Endothelial cell of umbilical vein (primary cell): ENCODE measurements at regions of chr17 and their contacts with region 1.

Region 1: GRCh38 chr17:64025732-64026294 is 5.4 kb upstream of the ICAM2 start:
- DNase-seq: peak; percentile 82
- H3K4me3 ChIP-seq: no peak overlapping the region
- H3K27ac ChIP-seq: peak overlapping the region; percentile 43
- H3K4me1 ChIP-seq: peaks cover 29% of the 10 kb centered on the region
- H3K27me3 ChIP-seq: no peaks in the 10 kb centered on the region
- CTCF ChIP-seq: peak; percentile 98
- POLR2A ChIP-seq: no peak

Region 2: GRCh38 chr17:63621766-63622519 is 403.9 kb before region 1 on chr17 and contains the start of gene MAP3K3:
- CTCF ChIA-PET with region 1: no interaction called
- POLR2A ChIA-PET with region 1: no interaction called
- dilution Hi-C with region 1: no loop called
- intact Hi-C with region 1: no loop called
- DNase-seq: peak; percentile 100
- H3K4me3 ChIP-seq: peak within 1 kb of the TSS; percentile 78 to 97 (median 80)
- H3K27ac ChIP-seq: peak within 1 kb of the TSS; percentile 53
- H3K4me1 ChIP-seq: peaks cover 27% of the 10 kb centered on the region
- H3K27me3 ChIP-seq: no peaks in the 10 kb centered on the region
- CTCF ChIP-seq: peak in 1 of 2 donors; percentile 24
- POLR2A ChIP-seq: peak; percentile 93
- total RNA-seq, gene MAP3K3: 81.0 and 91.4 TPM in 2 replicates

Region 3: DNA sequence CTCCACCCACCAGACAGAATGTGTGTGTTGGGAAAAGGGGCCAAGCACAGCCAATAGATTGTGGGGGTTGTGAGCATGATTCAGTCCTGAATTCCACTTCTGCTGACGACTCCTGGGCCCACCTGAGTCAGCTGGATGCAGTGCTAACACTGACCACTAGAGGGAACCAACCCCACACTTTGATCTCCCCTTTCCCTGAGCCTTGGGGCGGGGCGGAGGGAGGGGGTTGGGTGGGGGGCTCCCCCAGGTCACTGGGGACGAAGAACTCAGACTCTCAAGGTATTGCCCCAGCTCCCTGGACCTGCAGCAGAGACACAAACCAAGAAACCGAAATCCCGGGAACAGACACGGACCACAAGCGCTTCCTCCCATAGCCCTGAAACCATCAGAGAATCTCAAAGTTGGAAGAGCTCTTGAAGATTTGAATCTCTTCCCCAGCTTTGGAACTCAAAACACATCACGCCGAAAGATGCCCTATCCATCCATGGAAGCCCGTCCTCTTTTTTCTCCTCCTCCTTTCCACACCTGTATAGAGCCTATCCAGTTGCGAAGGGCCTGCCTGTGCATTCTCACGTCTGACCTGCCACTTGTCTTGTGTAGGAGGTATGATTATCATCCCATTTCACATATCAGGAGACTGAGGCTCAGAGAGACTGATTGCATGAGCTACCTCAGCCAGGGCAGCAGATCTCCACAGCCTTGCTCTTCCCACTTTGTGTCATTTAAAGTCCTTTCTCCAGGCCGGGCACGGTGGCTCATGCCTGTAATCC is 114.0 kb before region 1 on chr17:
- CTCF ChIA-PET with region 1: interaction called, 159 read pairs
- POLR2A ChIA-PET with region 1: no interaction called
- dilution Hi-C with region 1: no loop called
- intact Hi-C with region 1: no loop called
- DNase-seq: peak; percentile 26
- H3K4me3 ChIP-seq: no peak overlapping the region
- H3K27ac ChIP-seq: no peak overlapping the region
- H3K4me1 ChIP-seq: no peaks in the 10 kb centered on the region
- H3K27me3 ChIP-seq: peaks cover 6 to 8% of the 10 kb centered on the region in 2 experiments
- CTCF ChIP-seq: peak; percentile 34 to 70
- POLR2A ChIP-seq: no peak

Region 4: GRCh38 chr17:63998050-63998720 is 27.6 kb before region 1 on chr17 and contains the start of gene PRR29:
- CTCF ChIA-PET with region 1: interaction called, 140 read pairs
- POLR2A ChIA-PET with region 1: interaction called, 13 read pairs
- dilution Hi-C with region 1: no loop called
- intact Hi-C with region 1: loop called (anchors 1 kb)
- DNase-seq: peak; percentile 71
- H3K4me3 ChIP-seq: peak within 1 kb of the TSS; percentile 12 to 59 (median 37)
- H3K27ac ChIP-seq: peak within 1 kb of the TSS; percentile 23
- H3K4me1 ChIP-seq: peaks cover 42% of the 10 kb centered on the region
- H3K27me3 ChIP-seq: no peaks in the 10 kb centered on the region
- CTCF ChIP-seq: no peak
- POLR2A ChIP-seq: no peak
- total RNA-seq, gene PRR29: 0.78 and 1.2 TPM in 2 replicates

Region 5: GRCh38 chr17:64041912-64042311 is 16.1 kb after region 1 on chr17:
- CTCF ChIA-PET with region 1: interaction called, 24 read pairs
- POLR2A ChIA-PET with region 1: no interaction called
- dilution Hi-C with region 1: no loop called
- intact Hi-C with region 1: no loop called
- DNase-seq: no peak
- H3K4me3 ChIP-seq: no peak overlapping the region
- H3K27ac ChIP-seq: no peak overlapping the region
- H3K4me1 ChIP-seq: no peaks in the 10 kb centered on the region
- H3K27me3 ChIP-seq: no peaks in the 10 kb centered on the region
- CTCF ChIP-seq: no peak
- POLR2A ChIP-seq: no peak

Region 6: GRCh38 chr17:64081802-64082799 is 56.3 kb after region 1 on chr17:
- CTCF ChIA-PET with region 1: interaction called, 10 read pairs
- POLR2A ChIA-PET with region 1: no interaction called
- dilution Hi-C with region 1: no loop called
- intact Hi-C with region 1: no loop called
- DNase-seq: peak; percentile 87
- H3K4me3 ChIP-seq: no peak overlapping the region
- H3K27ac ChIP-seq: peak overlapping the region; percentile 58
- H3K4me1 ChIP-seq: peaks cover 29% of the 10 kb centered on the region
- H3K27me3 ChIP-seq: no peaks in the 10 kb centered on the region
- CTCF ChIP-seq: no peak
- POLR2A ChIP-seq: peak; percentile 30

Region 7: GRCh38 chr17:64145757-64146417 is 120.1 kb after region 1 on chr17:
- CTCF ChIA-PET with region 1: interaction called, 4 read pairs
- POLR2A ChIA-PET with region 1: no interaction called
- dilution Hi-C with region 1: loop called (anchors 25 kb)
- intact Hi-C with region 1: no loop called
- DNase-seq: peak; percentile 99
- H3K4me3 ChIP-seq: peak overlapping the region; percentile 31 to 72 (median 64)
- H3K27ac ChIP-seq: peak overlapping the region; percentile 63
- H3K4me1 ChIP-seq: peaks cover 21% of the 10 kb centered on the region
- H3K27me3 ChIP-seq: no peaks in the 10 kb centered on the region
- CTCF ChIP-seq: no peak
- POLR2A ChIP-seq: peak; percentile 100